Dendritic cell treated with granulocyte-macrophage colony-stimulating factor and Interleukin-4, amounts not matched to agents 40 ng/mL and 50 ng/mL, for 4 days (primary cell): ENCODE measurements at regions of chr18 and their contacts with region 1.

Region 1: DNA sequence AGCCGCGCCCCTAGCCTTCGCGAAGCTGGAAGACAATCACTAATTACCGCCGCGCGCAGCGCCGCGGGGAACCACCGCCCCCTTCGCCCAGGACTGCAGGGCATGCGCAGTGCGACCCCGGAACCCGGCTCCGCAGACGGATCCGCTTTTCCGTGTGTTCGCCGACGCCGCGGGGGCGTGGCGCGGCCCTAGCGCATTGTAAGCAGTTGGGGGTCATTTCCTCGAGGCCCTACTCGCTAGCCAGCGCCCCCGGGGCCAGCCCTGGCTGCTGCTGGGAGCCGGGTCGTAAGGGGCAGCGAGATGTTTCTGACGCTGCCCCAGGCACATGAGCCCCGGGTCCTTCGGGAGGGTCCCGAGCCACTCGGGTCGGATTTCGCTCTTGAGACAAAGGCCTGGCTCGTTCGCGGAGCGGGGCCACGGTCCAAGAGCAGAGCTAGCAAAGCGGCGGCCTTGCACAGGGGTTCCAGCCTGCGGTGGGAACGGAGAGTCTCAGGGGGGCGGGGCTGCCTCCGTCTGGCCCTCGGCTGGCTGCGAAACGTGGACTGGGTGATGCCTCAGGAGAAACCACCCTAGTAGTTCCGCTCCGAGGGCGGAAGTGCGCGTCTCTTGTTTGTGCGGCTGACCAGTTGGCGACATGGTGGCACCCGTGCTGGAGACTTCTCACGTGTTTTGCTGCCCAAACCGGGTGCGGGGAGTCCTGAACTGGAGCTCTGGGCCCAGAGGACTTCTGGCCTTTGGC is at the starts of genes ELP2 and SLC39A6:
- H3K4me3 Mint-ChIP-seq: peak within 1 kb of the TSS; percentile 94
- H3K27ac Mint-ChIP-seq: peak within 1 kb of the TSS; percentile 99
- H3K4me1 Mint-ChIP-seq: peaks cover 40% of the 10 kb centered on the region
- H3K27me3 Mint-ChIP-seq: no peaks in the 10 kb centered on the region

Region 2: DNA sequence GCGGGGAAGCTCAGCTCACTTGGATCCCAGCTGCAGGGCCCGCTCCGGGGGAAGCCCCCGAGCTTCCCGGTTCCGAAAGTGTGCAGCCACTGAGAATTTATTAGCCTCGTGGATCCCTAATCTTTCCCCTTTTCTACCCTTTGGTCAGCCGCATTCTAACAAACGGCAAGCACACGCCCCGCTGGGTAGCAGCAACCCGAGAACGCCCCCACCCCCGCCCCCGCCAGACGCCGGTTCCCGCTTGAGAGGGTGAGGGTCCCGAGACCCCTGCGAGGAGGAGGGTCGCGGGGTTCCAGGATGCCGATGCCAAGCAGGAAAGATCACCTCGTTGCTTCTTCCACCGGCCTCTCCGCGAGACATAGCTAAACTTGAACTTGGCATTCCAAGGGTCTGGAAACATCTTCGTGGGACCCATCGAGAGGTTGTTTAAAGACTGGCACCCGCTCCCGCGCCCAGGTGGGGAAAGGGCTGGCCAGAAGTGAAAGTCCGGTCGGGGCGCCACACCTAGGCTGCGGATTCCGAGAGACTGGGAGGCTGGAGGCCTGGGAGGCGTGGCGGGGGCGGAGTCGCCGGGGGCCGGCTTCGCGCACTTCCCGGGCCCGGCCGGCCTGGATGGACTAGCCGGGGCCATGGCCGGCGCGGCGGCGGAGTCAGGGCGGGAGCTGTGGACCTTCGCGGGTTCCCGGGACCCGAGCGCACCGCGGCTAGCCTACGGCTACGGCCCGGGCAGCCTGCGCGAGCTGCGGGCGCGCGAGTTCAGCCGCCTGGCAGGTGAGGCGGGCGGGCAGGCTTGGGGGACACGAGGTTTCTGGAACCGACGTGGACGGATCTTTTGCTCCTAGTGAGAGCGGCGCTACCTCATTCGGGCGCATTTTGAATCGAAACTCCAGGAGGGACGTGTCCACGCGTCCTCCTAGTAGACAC is 57.7 kb after region 1 on chr18 and contains the start of gene MOCOS:
- intact Hi-C with region 1: loop called (anchors 2 kb)
- H3K4me3 Mint-ChIP-seq: peak within 1 kb of the TSS; percentile 84
- H3K27ac Mint-ChIP-seq: peak within 1 kb of the TSS; percentile 75
- H3K4me1 Mint-ChIP-seq: peaks cover 64% of the 10 kb centered on the region
- H3K27me3 Mint-ChIP-seq: peaks cover 63% of the 10 kb centered on the region

Region 3: DNA sequence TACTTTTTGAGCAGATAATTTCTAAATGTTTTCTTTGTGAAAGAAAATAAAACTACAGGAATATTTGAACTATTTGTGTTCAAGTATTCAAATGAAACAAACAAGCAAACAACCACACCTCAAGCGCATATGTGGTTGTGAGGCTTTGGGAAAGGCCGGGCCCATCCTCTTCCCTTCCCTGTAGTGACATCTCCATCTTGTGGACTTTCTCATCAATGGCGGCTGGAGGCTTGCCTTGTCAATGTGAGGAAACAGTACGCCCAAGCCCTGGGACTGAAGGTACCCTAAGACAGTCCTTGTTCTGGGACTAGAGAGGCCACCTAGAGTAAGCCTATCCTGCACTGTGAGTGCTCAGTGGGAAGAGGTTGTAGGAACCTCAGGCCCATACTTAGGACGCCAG is 532.5 kb after region 1 on chr18:
- intact Hi-C with region 1: no loop called
- H3K4me3 Mint-ChIP-seq: no peak overlapping the region
- H3K27ac Mint-ChIP-seq: no peak overlapping the region
- H3K4me1 Mint-ChIP-seq: no peaks in the 10 kb centered on the region
- H3K27me3 Mint-ChIP-seq: no peaks in the 10 kb centered on the region